ENCODE measurements at regions of chr4 and their contacts with region 1.

Region 1: DNA sequence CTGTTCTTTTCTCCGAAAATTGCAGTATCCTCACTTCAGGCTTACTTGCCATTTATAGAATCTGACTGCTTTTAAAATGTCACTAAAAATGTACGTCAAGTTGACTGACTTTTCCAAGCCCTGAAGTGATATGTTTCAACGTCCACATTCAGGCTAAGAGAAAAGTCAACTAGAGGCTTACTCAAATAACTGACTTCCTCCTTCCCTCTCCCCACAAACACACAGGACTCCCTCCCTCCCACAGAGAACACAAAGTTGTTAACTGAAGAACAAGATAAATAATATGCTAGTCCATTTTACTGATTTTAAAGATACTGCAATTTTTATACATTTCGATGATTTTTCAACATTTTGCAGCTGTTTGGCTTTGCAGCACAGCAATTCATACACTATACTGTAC is 13.8 kb upstream of the CDKL2 start:
- DNase-seq: no peak
- ATAC-seq: no peak
- H3K4me3 ChIP-seq: no peak overlapping the region
- H3K27ac ChIP-seq: no peak overlapping the region
- H3K4me1 ChIP-seq: no peaks in the 10 kb centered on the region
- H3K27me3 ChIP-seq: no peaks in the 10 kb centered on the region

Region 2: DNA sequence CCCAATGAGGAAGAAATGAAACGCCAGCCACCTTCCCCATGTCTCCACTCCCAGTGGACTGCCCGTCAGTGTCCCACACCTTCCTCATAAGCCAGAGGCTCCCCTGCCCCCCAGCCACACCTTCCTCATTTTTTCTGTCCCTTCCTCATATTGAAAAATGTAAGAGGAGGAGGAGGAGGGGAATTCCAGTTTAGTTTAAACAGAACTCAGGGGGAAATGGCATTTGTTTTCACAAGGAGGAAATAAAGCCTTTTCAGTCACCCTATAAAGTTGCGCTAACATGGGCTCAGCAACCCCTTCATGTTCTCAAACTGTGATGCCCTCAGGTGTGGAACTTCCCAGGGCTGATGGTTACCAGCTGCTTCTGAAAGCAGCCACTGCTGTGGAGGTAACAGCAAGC is 613.4 kb before region 1 on chr4:
- intact Hi-C with region 1: no loop called
- DNase-seq: peak in 1 of 2 donors; percentile 57
- ATAC-seq: no peak
- H3K4me3 ChIP-seq: no peak overlapping the region
- H3K27ac ChIP-seq: no peak overlapping the region
- H3K4me1 ChIP-seq: no peaks in the 10 kb centered on the region
- H3K27me3 ChIP-seq: no peaks in the 10 kb centered on the region

Region 3: DNA sequence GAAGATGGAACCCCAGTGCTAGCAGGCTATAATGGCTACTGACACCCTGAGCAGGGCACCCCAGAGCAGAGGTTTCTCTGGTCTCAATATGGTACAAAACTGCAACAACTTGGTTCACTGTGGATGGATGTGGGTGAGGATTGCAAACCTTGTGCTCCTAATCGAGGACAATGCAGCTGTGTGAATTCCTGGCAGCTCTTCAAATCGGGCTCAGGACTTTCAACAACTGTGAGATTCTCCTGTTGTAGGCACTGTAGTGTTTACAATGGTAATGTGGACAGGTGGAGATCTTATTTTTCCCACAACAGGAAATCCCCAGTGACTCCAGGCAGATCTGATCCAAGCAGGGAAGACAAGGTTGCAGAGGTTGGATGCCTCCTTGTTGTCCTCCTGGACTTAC is 231.3 kb before region 1 on chr4:
- intact Hi-C with region 1: no loop called
- DNase-seq: no peak
- ATAC-seq: no peak
- H3K4me3 ChIP-seq: no peak overlapping the region
- H3K27ac ChIP-seq: no peak overlapping the region
- H3K4me1 ChIP-seq: no peaks in the 10 kb centered on the region
- H3K27me3 ChIP-seq: no peaks in the 10 kb centered on the region

Region 4: DNA sequence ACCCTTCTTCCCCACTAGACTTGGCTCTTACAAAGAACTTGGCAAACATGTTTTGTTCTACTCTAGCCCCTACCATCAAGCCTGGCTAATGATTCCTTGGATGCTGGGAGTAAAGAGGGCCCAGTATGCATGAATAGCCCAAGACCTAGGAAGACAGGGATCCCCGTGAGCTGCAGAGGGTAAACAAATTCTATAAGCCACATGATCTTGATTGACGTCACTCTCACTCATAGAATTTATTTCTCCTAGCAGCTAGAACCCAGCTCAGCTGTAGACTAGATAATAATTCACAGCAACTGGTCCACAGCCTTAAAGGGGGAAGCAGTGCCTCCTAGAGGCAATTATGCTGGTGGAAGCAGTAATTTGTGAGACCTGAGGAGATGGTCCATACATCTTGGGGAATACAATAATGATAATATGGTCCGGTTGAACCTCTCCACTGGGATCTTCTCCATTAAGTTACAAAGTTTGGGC is 64.2 kb after region 1 on chr4:
- intact Hi-C with region 1: no loop called
- DNase-seq: no peak
- ATAC-seq: no peak
- H3K4me3 ChIP-seq: no peak overlapping the region
- H3K27ac ChIP-seq: no peak overlapping the region
- H3K4me1 ChIP-seq: peaks cover 0 to 3% of the 10 kb centered on the region in 2 donors
- H3K27me3 ChIP-seq: no peaks in the 10 kb centered on the region

Region 5: DNA sequence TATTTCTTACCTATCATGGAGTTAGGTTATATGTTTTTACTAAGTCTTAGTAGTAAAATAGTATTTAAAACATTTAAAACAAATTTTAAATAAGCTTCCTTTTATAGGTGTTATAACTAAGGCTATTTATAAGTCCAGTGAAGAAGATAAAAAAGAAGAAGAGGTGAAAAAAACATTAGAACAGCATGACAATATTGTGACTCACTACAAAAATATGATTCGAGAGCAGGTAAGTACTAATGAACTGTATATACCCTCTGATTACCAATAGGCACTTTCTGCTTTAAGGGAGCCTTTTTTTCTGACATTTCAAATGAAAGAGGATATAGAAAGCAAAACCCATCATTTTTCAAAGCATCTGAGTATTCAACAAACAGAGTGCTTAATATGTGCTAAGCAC is 156.9 kb after region 1 on chr4:
- intact Hi-C with region 1: loop called in 1 of 2 experiments (anchors 10 kb)
- DNase-seq: no peak
- ATAC-seq: no peak
- H3K4me3 ChIP-seq: no peak overlapping the region
- H3K27ac ChIP-seq: no peak overlapping the region
- H3K4me1 ChIP-seq: no peaks in the 10 kb centered on the region
- H3K27me3 ChIP-seq: no peaks in the 10 kb centered on the region

Measured in aorta (tissue), 5 donors.